ENCODE measurements at regions of chr10 and their contacts with region 1.

Region 1: GRCh38 chr10:6678211-6678803 is 98.2 kb upstream of the PRKCQ start:
- DNase-seq: peak in 1 of 2 experiments; percentile 80
- H3K4me3 ChIP-seq: no peak overlapping the region
- H3K27ac ChIP-seq: no peak overlapping the region
- H3K4me1 ChIP-seq: no peaks in the 10 kb centered on the region; a peak in 1 of 7 replicates
- H3K27me3 ChIP-seq: no peaks in the 10 kb centered on the region
- CTCF ChIP-seq: peak; percentile 69 to 91 (median 84)
- EP300 ChIP-seq: no peak
- POLR2A ChIP-seq: no peak
- RAD21 ChIP-seq: peak; percentile 87 to 91

Region 2: DNA sequence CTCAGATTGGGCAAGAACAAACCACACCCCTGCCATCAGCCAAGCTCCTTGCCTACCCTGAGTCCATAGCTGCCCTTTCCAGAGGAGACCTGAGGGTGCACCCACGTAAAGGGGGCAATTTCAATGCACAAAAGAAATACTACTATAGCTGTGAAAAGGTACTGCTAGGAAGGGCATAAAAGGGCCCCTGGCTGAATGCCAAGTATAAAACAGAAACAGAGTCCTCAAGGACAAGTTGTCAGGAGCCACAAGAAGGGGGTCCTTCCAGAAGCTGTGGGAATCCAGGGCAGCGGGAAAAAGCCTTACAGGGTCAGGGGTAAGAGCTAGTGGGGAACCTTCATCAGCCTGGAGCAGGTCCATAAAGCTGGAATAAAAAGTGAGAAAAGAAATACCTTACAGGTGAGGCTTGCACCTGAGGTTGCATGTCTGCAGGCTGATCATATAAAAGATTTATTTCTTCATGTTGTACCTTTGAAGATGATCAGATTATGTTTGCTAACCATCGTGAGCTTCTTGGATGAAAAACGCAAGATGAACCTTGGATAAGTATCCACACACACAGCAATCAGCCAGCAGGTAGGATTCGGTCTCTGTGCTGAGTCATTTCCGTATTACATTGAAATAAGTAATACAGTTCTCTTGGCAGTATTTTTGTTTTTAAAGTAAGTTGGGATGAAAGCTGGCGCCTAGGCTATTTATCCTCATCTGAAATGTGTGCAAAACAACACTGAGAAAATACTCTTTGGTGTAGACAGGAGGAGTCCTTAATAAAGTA is 10.5 kb after region 1 on chr10:
- CTCF ChIA-PET with region 1: interaction called, 20 read pairs
- POLR2A ChIA-PET with region 1: interaction called, 3 read pairs
- DNase-seq: no peak
- H3K4me3 ChIP-seq: no peak overlapping the region
- H3K27ac ChIP-seq: no peak overlapping the region
- H3K4me1 ChIP-seq: no peaks in the 10 kb centered on the region
- H3K27me3 ChIP-seq: peaks cover 0 to 1% (median 0%) of the 10 kb centered on the region in 4 experiments; a peak in 1 of 7 replicates
- CTCF ChIP-seq: no peak
- EP300 ChIP-seq: no peak
- POLR2A ChIP-seq: no peak
- RAD21 ChIP-seq: no peak